K562 (cell line): ENCODE measurements at regions of chrX and their contacts with region 1.

Region 1: GRCh38 chrX:54639346-54640102 is 109.5 kb downstream of the GNL3L start:
- DNase-seq: peak; percentile 83 to 96 (median 86)
- ATAC-seq: peak; percentile 99
- H3K4me3 ChIP-seq: peak overlapping the region; percentile 55
- H3K27ac ChIP-seq: peak overlapping the region; percentile 99
- H3K4me1 ChIP-seq: peaks cover 2 to 3% of the 10 kb centered on the region in 2 experiments; a peak in 3 of 5 replicates
- H3K27me3 ChIP-seq: no peaks in the 10 kb centered on the region
- CTCF ChIP-seq: peak; percentile 76 to 83 (median 82)
- EP300 ChIP-seq: peak; percentile 8; the same call in 1 of the 2 replicates
- POLR2A ChIP-seq: peak; percentile 88
- RAD21 ChIP-seq: peak; percentile 50 to 67

Region 2: GRCh38 chrX:54044126-54044876 is 595.2 kb before region 1 on chrX and contains the start of gene PHF8:
- CTCF ChIA-PET with region 1: no interaction called
- POLR2A ChIA-PET with region 1: no interaction called
- in situ Hi-C with region 1: no loop called
- intact Hi-C with region 1: loop called (anchors 10 kb)
- DNase-seq: peak; percentile 88 to 95 (median 90)
- ATAC-seq: peak; percentile 94
- H3K4me3 ChIP-seq: peak within 1 kb of the TSS; percentile 81
- H3K27ac ChIP-seq: peak within 1 kb of the TSS; percentile 93
- H3K4me1 ChIP-seq: peaks cover 0 to 10% of the 10 kb centered on the region in 2 experiments; a peak in 3 of 5 replicates
- H3K27me3 ChIP-seq: no peaks in the 10 kb centered on the region
- CTCF ChIP-seq: no peak
- EP300 ChIP-seq: no peak
- POLR2A ChIP-seq: peak; percentile 70
- RAD21 ChIP-seq: no peak
- polyA plus RNA-seq, gene PHF8: 2.5 to 2.9 TPM

Region 3: DNA sequence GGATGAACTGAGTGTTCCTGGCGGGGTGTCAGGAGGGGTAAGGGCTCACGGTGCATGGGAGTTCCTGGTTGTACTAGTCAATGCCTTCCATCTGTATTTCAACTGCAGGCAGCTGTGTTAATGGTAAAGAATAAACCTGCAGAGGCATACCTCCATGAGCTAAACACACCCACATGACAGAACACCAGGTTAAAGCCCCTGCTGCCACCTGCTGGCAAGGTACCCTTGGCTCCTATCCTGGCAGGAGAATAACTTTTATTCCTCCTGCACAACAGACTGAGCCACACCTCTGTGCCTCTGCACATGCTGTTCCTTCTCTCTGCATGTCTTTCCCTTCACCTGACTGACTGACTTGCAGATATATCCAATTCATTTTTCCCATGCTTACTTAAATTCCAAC is 147.4 kb after region 1 on chrX:
- CTCF ChIA-PET with region 1: no interaction called
- POLR2A ChIA-PET with region 1: no interaction called
- in situ Hi-C with region 1: no loop called
- intact Hi-C with region 1: loop called (anchors 5 kb)
- DNase-seq: no peak
- ATAC-seq: peak; percentile 72
- H3K4me3 ChIP-seq: no peak overlapping the region
- H3K27ac ChIP-seq: no peak overlapping the region
- H3K4me1 ChIP-seq: no peaks in the 10 kb centered on the region
- H3K27me3 ChIP-seq: peaks cover 0 to 15% of the 10 kb centered on the region in 2 experiments; a peak in 1 of 5 replicates
- CTCF ChIP-seq: peak; percentile 8 to 29 (median 18); a peak in 2 of 6 replicates
- EP300 ChIP-seq: no peak
- POLR2A ChIP-seq: no peak
- RAD21 ChIP-seq: peak in 1 of 2 experiments; percentile 9; a peak in 1 of 4 replicates